CD14-positive monocyte (primary cell): ENCODE measurements at regions of chr18 and their contacts with region 1.

Region 1: DNA sequence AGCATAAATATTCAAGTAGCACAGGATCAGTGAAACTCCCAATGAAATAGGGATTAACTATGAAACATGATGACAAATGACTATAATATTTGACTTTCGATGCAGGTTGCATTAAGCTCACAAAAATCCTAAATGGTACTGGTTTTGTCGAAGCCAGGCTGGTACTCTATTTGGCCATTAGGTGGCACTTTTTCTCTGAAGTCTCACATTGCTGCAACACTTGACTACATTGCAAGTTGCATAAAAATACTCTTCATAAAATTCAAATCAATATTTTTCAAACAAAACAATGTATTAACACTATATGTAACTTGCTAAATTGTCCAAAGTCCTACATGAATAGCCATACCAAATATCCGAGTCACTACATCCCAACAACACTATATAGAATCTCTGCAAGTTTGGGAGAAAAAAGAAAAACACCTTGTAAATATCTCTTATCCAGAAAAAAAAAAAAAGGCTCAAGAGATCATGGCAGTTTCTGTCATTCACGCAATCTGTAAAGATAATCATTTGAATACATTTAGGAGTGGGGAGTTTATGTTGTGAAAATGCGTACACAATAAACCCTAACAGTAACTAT is 9.5 kb downstream of the RTTN start:
- DNase-seq: peak; percentile 18 to 47 (median 27)
- H3K4me3 ChIP-seq: no peak overlapping the region
- H3K4me3 Mint-ChIP-seq: no peak overlapping the region
- H3K27ac ChIP-seq: no peak overlapping the region
- H3K27ac Mint-ChIP-seq: no peak overlapping the region
- H3K4me1 ChIP-seq: no peaks in the 10 kb centered on the region
- H3K4me1 Mint-ChIP-seq: no peaks in the 10 kb centered on the region
- H3K27me3 ChIP-seq: no peaks in the 10 kb centered on the region
- H3K27me3 Mint-ChIP-seq: peaks cover 0 to 1% (median 0%) of the 10 kb centered on the region in 3 donors
- CTCF ChIP-seq: peak; percentile 82

Region 2: GRCh38 chr18:69858897-69859296 is 337.0 kb before region 1 on chr18:
- intact Hi-C with region 1: no loop called
- DNase-seq: no peak
- H3K4me3 ChIP-seq: no peak overlapping the region
- H3K4me3 Mint-ChIP-seq: no peak overlapping the region
- H3K27ac ChIP-seq: no peak overlapping the region
- H3K27ac Mint-ChIP-seq: no peak overlapping the region
- H3K4me1 ChIP-seq: no peaks in the 10 kb centered on the region
- H3K4me1 Mint-ChIP-seq: no peaks in the 10 kb centered on the region
- H3K27me3 ChIP-seq: no peaks in the 10 kb centered on the region
- H3K27me3 Mint-ChIP-seq: peaks cover 0 to 6% (median 0%) of the 10 kb centered on the region in 3 donors
- CTCF ChIP-seq: no peak

Region 3: GRCh38 chr18:70431203-70431624 is 235.3 kb after region 1 on chr18:
- intact Hi-C with region 1: loop called in 1 of 2 experiments (anchors 5 kb)
- DNase-seq: peak in 2 of 3 donors; percentile 44 to 51
- H3K4me3 ChIP-seq: no peak overlapping the region
- H3K4me3 Mint-ChIP-seq: no peak overlapping the region
- H3K27ac ChIP-seq: no peak overlapping the region
- H3K27ac Mint-ChIP-seq: peak overlapping the region in 3 of 7 donors; percentile 46 to 90 (median 81)
- H3K4me1 ChIP-seq: peaks cover 10 to 23% of the 10 kb centered on the region in 2 donors
- H3K4me1 Mint-ChIP-seq: peaks cover 23% of the 10 kb centered on the region
- H3K27me3 ChIP-seq: no peaks in the 10 kb centered on the region
- H3K27me3 Mint-ChIP-seq: no peaks in the 10 kb centered on the region
- CTCF ChIP-seq: no peak

Region 4: GRCh38 chr18:70454704-70455322 is 258.9 kb after region 1 on chr18:
- intact Hi-C with region 1: loop called (anchors 5 kb)
- DNase-seq: peak; percentile 46 to 73 (median 66)
- H3K4me3 ChIP-seq: no peak overlapping the region
- H3K4me3 Mint-ChIP-seq: no peak overlapping the region
- H3K27ac ChIP-seq: no peak overlapping the region
- H3K27ac Mint-ChIP-seq: no peak overlapping the region
- H3K4me1 ChIP-seq: peaks cover 4 to 5% of the 10 kb centered on the region in 2 donors
- H3K4me1 Mint-ChIP-seq: peaks cover 7% of the 10 kb centered on the region
- H3K27me3 ChIP-seq: no peaks in the 10 kb centered on the region
- H3K27me3 Mint-ChIP-seq: no peaks in the 10 kb centered on the region
- CTCF ChIP-seq: peak; percentile 90